ENCODE measurements at regions of chr15 and their contacts with region 1.

Region 1: GRCh38 chr15:44215594-44215993 is 20.5 kb upstream of the FRMD5 start:
- DNase-seq: no peak
- H3K4me3 Mint-ChIP-seq: no peak overlapping the region
- H3K27ac Mint-ChIP-seq: no peak overlapping the region
- H3K4me1 Mint-ChIP-seq: peaks cover 2% of the 10 kb centered on the region
- H3K27me3 Mint-ChIP-seq: peaks cover 15% of the 10 kb centered on the region

Region 2: DNA sequence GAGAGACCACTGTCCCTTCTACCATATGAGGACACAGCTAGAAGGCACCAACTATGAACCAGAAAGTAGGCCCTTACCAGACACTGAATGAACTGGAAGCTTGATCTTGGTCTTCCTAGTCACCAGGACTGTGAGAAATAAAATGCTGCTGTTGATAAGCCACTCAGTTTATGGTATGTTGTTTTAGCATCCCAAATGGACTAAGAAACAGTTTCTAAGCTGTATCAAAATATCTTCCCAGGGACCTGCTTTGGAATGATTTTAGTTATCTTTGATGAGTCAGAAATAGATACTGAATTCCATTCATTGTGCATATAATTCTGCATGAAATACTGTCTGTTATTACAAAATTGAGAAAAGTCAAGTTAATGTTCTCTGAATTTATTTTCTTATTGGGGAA is 370.2 kb before region 1 on chr15:
- CTCF ChIA-PET with region 1: no interaction called
- intact Hi-C with region 1: no loop called
- DNase-seq: no peak
- H3K4me3 Mint-ChIP-seq: no peak overlapping the region
- H3K27ac Mint-ChIP-seq: no peak overlapping the region
- H3K4me1 Mint-ChIP-seq: no peaks in the 10 kb centered on the region
- H3K27me3 Mint-ChIP-seq: no peaks in the 10 kb centered on the region

Region 3: DNA sequence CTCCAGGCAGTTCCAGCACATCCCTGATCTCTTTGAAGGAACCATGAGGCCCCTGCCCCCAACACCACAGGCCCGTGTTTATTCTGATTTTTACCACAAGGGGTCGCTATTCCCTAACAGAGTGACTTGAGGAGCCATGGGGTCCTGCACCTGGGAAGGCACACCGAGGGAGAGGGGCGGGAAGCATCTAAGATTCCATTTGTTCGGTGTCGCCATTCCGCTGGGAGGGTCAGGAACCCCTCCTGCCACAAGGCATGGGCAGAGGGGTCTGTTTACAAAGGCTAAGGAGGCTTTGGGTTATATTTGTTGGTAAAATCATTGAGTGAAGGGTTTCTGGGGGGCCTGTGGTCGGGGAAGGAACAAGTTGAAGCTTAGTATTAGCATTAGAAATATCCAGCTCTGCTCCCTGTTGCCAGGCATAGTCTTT is 311.7 kb before region 1 on chr15:
- CTCF ChIA-PET with region 1: interaction called, 4 read pairs
- intact Hi-C with region 1: loop called (anchors 1 kb)
- DNase-seq: peak; percentile 72
- H3K4me3 Mint-ChIP-seq: no peak overlapping the region
- H3K27ac Mint-ChIP-seq: no peak overlapping the region
- H3K4me1 Mint-ChIP-seq: peaks cover 3% of the 10 kb centered on the region
- H3K27me3 Mint-ChIP-seq: no peaks in the 10 kb centered on the region

Region 4: GRCh38 chr15:43974852-43975251 is 240.7 kb before region 1 on chr15:
- CTCF ChIA-PET with region 1: no interaction called
- intact Hi-C with region 1: no loop called
- DNase-seq: no peak
- H3K4me3 Mint-ChIP-seq: no peak overlapping the region
- H3K27ac Mint-ChIP-seq: no peak overlapping the region
- H3K4me1 Mint-ChIP-seq: peaks cover 18% of the 10 kb centered on the region
- H3K27me3 Mint-ChIP-seq: peaks cover 4% of the 10 kb centered on the region

Region 5: DNA sequence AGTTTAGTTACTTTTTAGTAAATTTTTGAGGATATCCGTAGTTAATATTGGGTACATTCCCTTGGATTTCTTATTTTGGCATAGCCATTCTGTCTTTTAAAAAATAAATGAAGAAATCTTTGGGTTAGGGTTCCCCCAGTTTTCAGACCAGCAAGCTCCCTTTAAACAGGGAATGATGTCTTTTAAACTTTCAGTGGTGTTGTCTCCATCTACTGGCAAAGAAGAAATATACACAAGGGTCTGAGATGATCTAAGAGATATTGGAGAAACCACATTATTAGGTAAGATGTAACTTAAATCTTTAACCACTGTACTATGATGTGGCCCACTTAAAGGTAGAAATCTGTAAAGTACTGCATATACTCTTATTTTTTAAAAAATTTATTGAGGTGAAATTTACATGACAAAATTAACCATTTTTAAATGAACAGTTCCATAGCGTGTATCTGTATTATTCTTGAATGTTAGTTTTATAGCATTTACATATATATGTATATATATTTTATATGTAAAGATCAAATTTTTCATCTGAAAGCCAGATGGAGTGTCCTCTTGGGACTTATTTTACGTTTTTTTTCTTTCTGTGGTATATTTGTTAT is 286.3 kb after region 1 on chr15:
- CTCF ChIA-PET with region 1: interaction called, 8 read pairs
- intact Hi-C with region 1: loop called (anchors 1 kb)
- DNase-seq: no peak
- H3K4me3 Mint-ChIP-seq: no peak overlapping the region
- H3K27ac Mint-ChIP-seq: no peak overlapping the region
- H3K4me1 Mint-ChIP-seq: peaks cover 18% of the 10 kb centered on the region
- H3K27me3 Mint-ChIP-seq: no peaks in the 10 kb centered on the region